GM18951 (cell line): ENCODE measurements at regions of chr3 and their contacts with region 1.

Region 1: GRCh38 chr3:15113463-15113862 is 14.5 kb upstream of the RBSN start:
- POLR2A ChIP-seq: no peak

Region 2: DNA sequence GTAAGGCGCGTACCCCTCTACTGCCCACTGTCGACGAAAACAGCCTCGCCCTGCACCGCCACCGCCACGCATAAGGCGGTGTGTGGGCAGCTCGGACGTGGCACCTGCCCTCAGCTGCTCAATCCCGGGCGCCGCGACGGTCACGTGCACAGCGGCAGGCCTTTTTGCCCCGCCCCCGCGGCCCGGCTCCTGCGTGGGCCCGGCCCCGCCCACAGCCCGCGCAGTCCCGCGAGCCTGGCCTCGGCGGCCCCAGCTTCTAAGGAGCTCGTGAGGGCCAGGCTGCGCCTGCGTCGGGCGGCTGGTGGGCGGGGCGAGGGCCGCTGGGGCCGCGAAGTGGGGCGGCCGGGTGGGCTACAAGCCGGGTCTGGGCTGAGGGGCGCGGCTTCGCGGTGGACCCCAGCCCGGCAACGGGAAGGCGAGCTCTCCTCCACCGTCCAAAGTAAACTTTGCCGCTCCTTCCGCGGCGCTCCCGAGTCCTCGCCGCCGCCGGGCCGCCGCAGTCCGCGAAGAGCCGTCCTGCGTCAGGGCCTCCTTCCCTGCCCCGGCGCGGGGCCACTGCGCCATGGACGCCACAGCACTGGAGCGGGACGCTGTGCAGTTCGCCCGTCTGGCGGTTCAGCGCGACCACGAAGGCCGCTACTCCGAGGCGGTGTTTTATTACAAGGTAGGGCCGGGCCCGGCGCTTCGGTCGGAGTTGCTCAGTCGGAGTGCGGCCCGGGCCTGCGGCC is 92.6 kb after region 1 on chr3 and contains the start of gene CAPN7:
- in situ Hi-C with region 1: loop called (anchors 5 kb)
- POLR2A ChIP-seq: peak; percentile 90

Region 3: DNA sequence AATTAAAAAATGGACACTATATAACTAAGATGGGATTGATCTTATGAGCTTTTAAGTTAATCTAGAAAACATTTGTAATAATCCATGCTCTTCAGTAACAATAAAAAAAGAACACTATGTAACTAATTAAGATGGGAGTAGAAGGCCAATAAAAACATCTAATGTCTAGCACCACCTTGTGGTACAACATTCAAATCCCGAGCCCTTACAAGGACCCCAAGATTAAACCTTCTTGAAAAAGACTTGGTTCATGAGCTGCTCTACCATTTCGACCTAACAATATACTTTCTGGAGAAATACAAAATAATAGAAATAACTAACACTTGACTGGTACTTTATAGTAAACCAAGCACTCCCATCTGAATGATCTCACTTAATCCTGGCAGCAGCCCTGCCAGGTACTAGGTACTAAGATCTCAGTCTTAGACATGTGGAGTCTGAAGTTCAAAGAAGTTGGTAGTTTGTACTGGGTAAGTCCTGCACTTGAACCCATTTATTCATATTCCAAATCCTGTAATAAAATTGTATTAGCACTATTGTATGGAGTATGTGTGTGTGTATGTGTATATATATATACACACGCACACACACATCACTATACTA is 292.1 kb after region 1 on chr3:
- in situ Hi-C with region 1: loop called (anchors 10 kb)
- POLR2A ChIP-seq: no peak